IMR-90 (cell line): ENCODE measurements at regions of chr1 and their contacts with region 1.

Region 1: GRCh38 chr1:10387413-10388079 is 11.3 kb upstream of the PGD start:
- DNase-seq: peak; percentile 76
- ATAC-seq: peak; percentile 84
- H3K4me3 ChIP-seq: no peak overlapping the region
- H3K27ac ChIP-seq: peak overlapping the region; percentile 73
- H3K4me1 ChIP-seq: peaks cover 13% of the 10 kb centered on the region
- H3K27me3 ChIP-seq: no peaks in the 10 kb centered on the region
- CTCF ChIP-seq: peak; percentile 27; the same call in 1 of the 2 replicates
- POLR2A ChIP-seq: no peak
- RAD21 ChIP-seq: no peak

Region 2: GRCh38 chr1:10374442-10374860 is 13.1 kb before region 1 on chr1:
- CTCF ChIA-PET with region 1: no interaction called
- POLR2A ChIA-PET with region 1: no interaction called
- dilution Hi-C with region 1: no loop called
- in situ Hi-C with region 1: no loop called
- intact Hi-C with region 1: no loop called
- DNase-seq: peak; percentile 23
- ATAC-seq: no peak
- H3K4me3 ChIP-seq: no peak overlapping the region
- H3K27ac ChIP-seq: no peak overlapping the region
- H3K4me1 ChIP-seq: peaks cover 4% of the 10 kb centered on the region; the same call in 1 of the 2 replicates
- H3K27me3 ChIP-seq: no peaks in the 10 kb centered on the region
- CTCF ChIP-seq: no peak
- POLR2A ChIP-seq: no peak
- RAD21 ChIP-seq: no peak

Region 3: GRCh38 chr1:10398734-10399623 is 11.4 kb after region 1 on chr1 and contains the start of gene PGD:
- CTCF ChIA-PET with region 1: no interaction called
- POLR2A ChIA-PET with region 1: interaction called, 22 read pairs
- dilution Hi-C with region 1: no loop called
- in situ Hi-C with region 1: no loop called
- intact Hi-C with region 1: loop called (anchors 1 kb)
- DNase-seq: peak; percentile 98
- ATAC-seq: peak; percentile 95
- H3K4me3 ChIP-seq: peak within 1 kb of the TSS; percentile 76
- H3K27ac ChIP-seq: peak within 1 kb of the TSS; percentile 85
- H3K4me1 ChIP-seq: peaks cover 6% of the 10 kb centered on the region
- H3K27me3 ChIP-seq: no peaks in the 10 kb centered on the region
- CTCF ChIP-seq: no peak
- POLR2A ChIP-seq: peak; percentile 96
- RAD21 ChIP-seq: no peak
- total RNA-seq, gene PGD: 187 and 216 TPM in 2 replicates

Region 4: GRCh38 chr1:10459181-10459580 is 71.6 kb after region 1 on chr1:
- CTCF ChIA-PET with region 1: no interaction called
- POLR2A ChIA-PET with region 1: no interaction called
- dilution Hi-C with region 1: no loop called
- in situ Hi-C with region 1: no loop called
- intact Hi-C with region 1: no loop called
- DNase-seq: peak; percentile 80
- ATAC-seq: peak; percentile 94
- H3K4me3 ChIP-seq: no peak overlapping the region
- H3K27ac ChIP-seq: no peak overlapping the region
- H3K4me1 ChIP-seq: peaks cover 2% of the 10 kb centered on the region; the same call in 1 of the 2 replicates
- H3K27me3 ChIP-seq: no peaks in the 10 kb centered on the region
- CTCF ChIP-seq: no peak
- POLR2A ChIP-seq: no peak
- RAD21 ChIP-seq: no peak